ENCODE measurements at regions of chr20 and their contacts with region 1.

Region 1: GRCh38 chr20:57693002-57693640 is 16.7 kb downstream of the PMEPA1 start:
- DNase-seq: no peak
- ATAC-seq: peak in 1 of 2 experiments; percentile 10; a peak in 3 of 6 replicates
- H3K4me3 ChIP-seq: no peak overlapping the region
- H3K27ac ChIP-seq: peak overlapping the region; percentile 92 to 97
- H3K4me1 ChIP-seq: peaks cover 100% of the 10 kb centered on the region
- CTCF ChIP-seq: peak; percentile 15; the same call in 1 of the 3 replicates
- EP300 ChIP-seq: no peak
- POLR2A ChIP-seq: no peak
- RAD21 ChIP-seq: no peak

Region 2: GRCh38 chr20:57680131-57680716 is 12.9 kb before region 1 on chr20:
- CTCF ChIA-PET with region 1: interaction called, 19 read pairs
- POLR2A ChIA-PET with region 1: no interaction called
- DNase-seq: no peak
- ATAC-seq: no peak
- H3K4me3 ChIP-seq: no peak overlapping the region
- H3K27ac ChIP-seq: peak overlapping the region in 1 of 2 experiments; percentile 41; a peak in 2 of 6 replicates
- H3K4me1 ChIP-seq: peaks cover 98% of the 10 kb centered on the region
- CTCF ChIP-seq: no peak
- EP300 ChIP-seq: no peak
- POLR2A ChIP-seq: no peak
- RAD21 ChIP-seq: no peak

Region 3: DNA sequence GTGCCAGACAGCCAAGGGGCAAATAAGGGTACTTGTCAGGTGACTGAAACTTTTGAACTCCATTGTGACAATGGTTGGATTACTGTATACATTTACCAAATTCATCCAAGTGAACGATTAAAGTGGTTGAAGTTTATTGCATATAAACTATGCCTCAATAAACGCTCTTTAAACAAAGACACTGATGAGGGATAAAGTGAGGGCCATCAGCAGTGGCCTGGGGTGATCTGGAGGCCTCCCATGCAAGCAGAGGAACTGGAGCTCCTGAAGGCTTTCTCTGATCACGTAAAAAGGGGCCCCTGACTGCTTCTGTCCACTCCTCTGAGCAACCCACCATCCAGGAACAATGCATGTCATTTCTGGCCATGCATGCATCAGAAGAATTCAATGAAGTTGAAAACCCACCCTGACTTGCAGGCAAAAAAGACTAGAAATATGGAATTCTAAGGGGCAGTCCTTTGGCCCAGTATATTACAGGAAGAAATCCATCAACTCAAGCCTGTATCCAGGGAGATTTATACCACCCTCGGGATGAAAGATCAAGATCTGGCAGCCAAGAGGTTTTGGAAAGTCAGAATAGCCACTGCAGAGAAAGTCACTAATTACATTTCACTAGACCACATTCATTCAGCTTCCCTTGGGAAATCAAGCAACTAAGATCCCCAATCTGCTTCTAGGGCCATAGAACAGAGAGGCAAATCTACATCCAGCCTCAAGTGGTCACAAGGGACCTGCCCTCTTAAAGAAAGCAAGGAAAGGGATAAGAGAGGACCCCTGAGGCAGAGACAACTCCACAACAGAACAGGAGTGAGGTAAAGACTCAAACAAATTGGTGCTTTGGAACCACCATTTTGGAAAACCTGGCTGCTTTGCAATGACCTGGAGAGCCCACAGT is 584.7 kb after region 1 on chr20:
- CTCF ChIA-PET with region 1: no interaction called
- POLR2A ChIA-PET with region 1: no interaction called
- DNase-seq: no peak
- ATAC-seq: no peak
- H3K4me3 ChIP-seq: no peak overlapping the region
- H3K27ac ChIP-seq: no peak overlapping the region
- H3K4me1 ChIP-seq: no peaks in the 10 kb centered on the region
- CTCF ChIP-seq: no peak
- EP300 ChIP-seq: no peak
- POLR2A ChIP-seq: no peak
- RAD21 ChIP-seq: no peak